PC-3 (cell line): ENCODE measurements at regions of chr10 and their contacts with region 1.

Region 1: GRCh38 chr10:8053446-8054290 is 820 bp upstream of the GATA3 start:
- DNase-seq: peak; percentile 76
- ATAC-seq: peak; percentile 75
- H3K4me3 ChIP-seq: peak overlapping the region; percentile 74
- H3K27ac ChIP-seq: peak overlapping the region; percentile 73
- H3K4me1 ChIP-seq: peaks cover 4% of the 10 kb centered on the region; the same call in 1 of the 2 replicates
- H3K27me3 ChIP-seq: no peaks in the 10 kb centered on the region
- CTCF ChIP-seq: no peak; the same call in 1 of the 2 replicates

Region 2: DNA sequence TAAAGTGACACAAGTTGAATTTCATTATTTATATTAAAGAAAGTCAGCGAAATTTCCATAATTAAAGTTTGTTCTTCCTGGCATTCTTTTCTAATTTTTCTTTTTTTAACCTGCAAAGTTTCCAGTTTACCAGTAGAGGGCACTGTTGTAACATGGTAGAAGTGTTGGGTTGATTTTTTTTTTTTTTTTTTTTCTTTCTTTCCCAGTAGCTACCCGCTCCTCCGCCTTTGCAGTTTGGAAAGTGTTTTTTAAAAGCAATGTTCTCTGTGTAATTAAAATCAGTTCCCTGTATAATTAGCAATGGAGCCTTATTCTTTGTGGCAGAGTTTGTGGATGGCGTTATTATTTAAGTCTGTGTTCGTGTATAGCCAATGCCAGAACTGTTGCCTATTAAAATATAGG is 181.6 kb before region 1 on chr10:
- CTCF ChIA-PET with region 1: no interaction called
- POLR2A ChIA-PET with region 1: no interaction called
- intact Hi-C with region 1: loop called (anchors 5 kb)
- DNase-seq: peak; percentile 23
- ATAC-seq: no peak
- H3K4me3 ChIP-seq: peak overlapping the region; percentile 55
- H3K27ac ChIP-seq: no peak overlapping the region
- H3K4me1 ChIP-seq: peaks cover 7% of the 10 kb centered on the region; the same call in 1 of the 2 replicates
- H3K27me3 ChIP-seq: no peaks in the 10 kb centered on the region
- CTCF ChIP-seq: peak; percentile 62

Region 3: DNA sequence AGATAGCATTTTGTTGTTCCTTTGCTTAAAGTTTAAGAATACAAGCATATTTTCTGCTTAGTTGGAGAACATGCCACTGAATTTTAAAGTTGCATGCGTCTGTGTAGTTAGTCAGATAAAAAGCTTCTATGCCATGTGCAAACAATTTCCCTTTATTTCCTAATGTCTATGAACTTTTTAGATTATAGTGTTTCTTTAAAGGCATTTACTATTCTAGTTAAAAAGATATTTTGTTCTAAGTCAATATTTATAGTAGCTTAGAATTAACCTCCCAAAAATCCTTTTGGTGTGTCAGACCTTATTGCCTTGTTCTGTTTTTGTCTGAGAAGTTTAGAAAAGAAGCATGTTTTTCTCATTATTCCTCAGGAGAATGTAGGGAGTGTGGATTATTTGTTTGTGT is 98.2 kb before region 1 on chr10:
- CTCF ChIA-PET with region 1: no interaction called
- POLR2A ChIA-PET with region 1: no interaction called
- intact Hi-C with region 1: loop called (anchors 2 kb)
- DNase-seq: no peak
- ATAC-seq: no peak; the same call in 1 of the 2 replicates
- H3K4me3 ChIP-seq: no peak overlapping the region
- H3K27ac ChIP-seq: no peak overlapping the region
- H3K4me1 ChIP-seq: peaks cover 5% of the 10 kb centered on the region; the same call in 1 of the 2 replicates
- H3K27me3 ChIP-seq: no peaks in the 10 kb centered on the region
- CTCF ChIP-seq: no peak

Region 4: GRCh38 chr10:8312781-8313180 is 259.1 kb after region 1 on chr10:
- CTCF ChIA-PET with region 1: no interaction called
- POLR2A ChIA-PET with region 1: no interaction called
- intact Hi-C with region 1: loop called (anchors 10 kb)
- DNase-seq: peak; percentile 77
- ATAC-seq: no peak
- H3K4me3 ChIP-seq: peak overlapping the region; percentile 20; the same call in 1 of the 2 replicates
- H3K27ac ChIP-seq: peak overlapping the region; percentile 21; the same call in 1 of the 2 replicates
- H3K4me1 ChIP-seq: peaks cover 6% of the 10 kb centered on the region
- H3K27me3 ChIP-seq: no peaks in the 10 kb centered on the region
- CTCF ChIP-seq: no peak

Region 5: GRCh38 chr10:8428654-8429053 is 375.0 kb after region 1 on chr10:
- CTCF ChIA-PET with region 1: interaction called, 3 read pairs
- POLR2A ChIA-PET with region 1: interaction called, 10 read pairs
- intact Hi-C with region 1: no loop called
- DNase-seq: no peak
- ATAC-seq: no peak
- H3K4me3 ChIP-seq: no peak overlapping the region
- H3K27ac ChIP-seq: no peak overlapping the region
- H3K4me1 ChIP-seq: no peaks in the 10 kb centered on the region
- H3K27me3 ChIP-seq: no peaks in the 10 kb centered on the region
- CTCF ChIP-seq: no peak